ENCODE measurements at regions of chr19 and their contacts with region 1.

Region 1: DNA sequence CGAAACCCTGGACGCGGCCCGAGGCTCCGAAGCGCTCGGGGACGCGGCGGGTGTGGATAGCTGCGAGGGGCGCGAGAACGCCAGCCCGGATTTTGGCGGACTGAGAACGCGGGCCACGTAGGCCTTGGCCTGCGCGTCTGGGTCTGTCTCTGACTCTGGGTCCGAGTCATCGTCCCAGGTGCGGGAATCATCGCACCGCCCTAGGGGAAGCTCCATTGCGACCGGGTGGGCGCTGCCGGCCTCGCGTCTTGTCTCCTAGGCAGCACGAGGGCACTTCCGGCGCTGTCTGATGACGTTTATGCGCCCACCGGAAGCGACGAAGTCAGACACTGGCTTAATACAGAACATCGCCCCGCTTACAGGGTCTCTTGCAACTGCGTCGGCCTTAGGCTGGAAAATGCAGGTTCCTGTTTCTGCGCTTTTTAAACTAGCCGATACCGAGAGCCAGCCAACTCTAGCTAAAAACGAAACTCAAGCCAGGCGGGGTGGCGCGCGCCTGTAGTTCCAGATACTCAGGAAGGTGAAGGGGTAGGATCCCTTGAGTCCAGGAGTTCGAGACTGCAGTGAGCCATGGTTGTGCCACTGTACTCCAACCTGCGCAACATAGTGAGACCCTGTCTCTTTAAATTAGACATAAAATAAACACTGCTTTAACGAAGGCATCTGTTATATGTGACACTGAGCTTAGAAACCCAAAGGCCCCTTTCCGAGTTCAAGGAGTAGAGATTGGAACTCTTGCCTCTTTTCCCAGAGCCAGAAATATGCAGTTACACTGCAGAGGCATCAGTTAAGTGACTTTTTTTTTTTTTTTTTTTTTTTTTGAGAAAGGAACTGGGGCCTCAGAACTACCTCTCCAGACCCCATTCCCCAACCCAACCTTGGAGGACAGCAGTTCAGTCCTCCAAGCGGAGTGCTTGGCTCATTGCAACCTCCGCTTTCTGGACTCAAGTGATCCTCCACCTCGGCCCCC is at the start of gene FBXW9:
- DNase-seq: peak; percentile 99
- ATAC-seq: peak; percentile 92
- H3K4me3 Mint-ChIP-seq: peak within 1 kb of the TSS; percentile 79
- H3K27ac Mint-ChIP-seq: peak within 1 kb of the TSS; percentile 96
- H3K4me1 Mint-ChIP-seq: peaks cover 13% of the 10 kb centered on the region
- H3K27me3 Mint-ChIP-seq: no peaks in the 10 kb centered on the region
- CTCF ChIP-seq: no peak
- total RNA-seq, gene FBXW9: 9.9 to 10.8 TPM

Region 2: DNA sequence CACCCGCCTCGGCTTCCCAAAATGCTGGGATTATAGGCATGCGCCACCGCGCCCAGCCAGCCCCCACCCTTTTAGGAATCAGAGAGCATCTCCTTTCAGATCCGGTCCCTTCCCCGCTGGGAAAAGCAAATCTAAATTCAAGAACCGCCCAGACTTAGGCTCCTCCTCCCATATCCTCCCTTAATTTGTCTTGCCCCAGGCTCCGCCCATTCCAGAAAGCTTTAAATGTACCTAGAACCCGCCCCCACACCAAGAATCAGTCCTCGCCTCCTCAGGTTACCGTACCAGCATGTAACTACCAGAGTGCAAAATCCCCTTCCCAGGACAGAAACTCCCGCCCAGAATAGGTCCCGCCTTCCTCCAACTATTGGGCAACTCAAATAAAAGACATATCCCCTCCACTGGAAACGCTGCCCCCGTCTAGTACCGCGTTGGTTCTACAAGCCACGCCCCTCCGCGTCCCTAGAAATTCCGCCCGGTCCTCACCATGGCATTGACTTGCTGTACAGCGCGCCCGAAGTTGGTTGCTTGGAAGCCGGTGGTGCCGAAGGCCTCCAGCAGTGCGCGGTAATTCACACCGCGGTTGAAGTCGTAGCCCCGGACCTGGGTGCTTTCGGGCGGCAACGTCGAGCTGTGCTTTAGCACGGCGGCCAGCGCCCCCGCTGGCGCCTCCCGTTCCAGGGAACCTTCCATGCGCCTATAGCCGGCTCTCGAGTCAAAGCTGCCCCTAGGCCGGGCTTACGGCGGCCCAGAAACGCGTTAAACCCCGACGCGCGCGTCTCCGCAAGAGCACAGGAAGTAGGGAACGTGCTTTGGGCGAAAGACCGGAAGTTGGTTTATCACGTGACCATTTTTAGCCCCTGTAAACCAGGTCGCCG is 15.3 kb before region 1 on chr19 and contains the start of gene DHPS:
- CTCF ChIA-PET with region 1: interaction called, 5 read pairs
- POLR2A ChIA-PET with region 1: interaction called, 38 read pairs
- intact Hi-C with region 1: no loop called
- DNase-seq: peak; percentile 97
- ATAC-seq: peak; percentile 89
- H3K4me3 Mint-ChIP-seq: peak within 1 kb of the TSS; percentile 93
- H3K27ac Mint-ChIP-seq: peak within 1 kb of the TSS; percentile 94
- H3K4me1 Mint-ChIP-seq: peaks cover 25% of the 10 kb centered on the region
- H3K27me3 Mint-ChIP-seq: no peaks in the 10 kb centered on the region
- CTCF ChIP-seq: no peak
- total RNA-seq, gene DHPS: 113 TPM

Region 3: DNA sequence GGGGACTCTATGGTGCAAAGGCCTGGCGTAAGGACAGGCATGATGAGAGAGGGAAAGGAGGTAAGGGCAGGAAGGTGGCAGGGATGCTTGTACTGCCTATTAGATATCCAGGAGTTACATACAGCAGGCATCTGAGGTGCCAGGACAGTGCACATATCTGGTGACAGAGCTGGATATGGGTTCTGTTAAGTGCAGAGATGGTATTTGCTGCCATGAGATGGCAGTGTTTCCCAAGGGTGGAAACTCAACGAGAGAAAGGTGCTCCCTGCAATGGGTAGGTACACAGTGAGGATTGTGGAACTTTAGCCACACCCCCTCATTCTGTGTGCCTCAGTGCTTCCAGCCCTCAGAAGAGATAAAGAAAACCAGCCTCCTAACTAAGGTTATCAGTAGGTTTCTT is 20.2 kb after region 1 on chr19:
- CTCF ChIA-PET with region 1: interaction called, 4 read pairs
- POLR2A ChIA-PET with region 1: interaction called, 18 read pairs
- intact Hi-C with region 1: no loop called
- DNase-seq: peak; percentile 49
- ATAC-seq: peak; percentile 67
- H3K4me3 Mint-ChIP-seq: no peak overlapping the region
- H3K27ac Mint-ChIP-seq: peak overlapping the region; percentile 20
- H3K4me1 Mint-ChIP-seq: peaks cover 23% of the 10 kb centered on the region
- H3K27me3 Mint-ChIP-seq: no peaks in the 10 kb centered on the region
- CTCF ChIP-seq: peak; percentile 28

Region 4: GRCh38 chr19:12774584-12775555 is 78.2 kb after region 1 on chr19 and contains the start of gene HOOK2:
- CTCF ChIA-PET with region 1: no interaction called
- POLR2A ChIA-PET with region 1: no interaction called
- intact Hi-C with region 1: no loop called
- DNase-seq: no peak
- ATAC-seq: no peak
- H3K4me3 Mint-ChIP-seq: peak within 1 kb of the TSS; percentile 71
- H3K27ac Mint-ChIP-seq: peak within 1 kb of the TSS; percentile 71
- H3K4me1 Mint-ChIP-seq: peaks cover 34% of the 10 kb centered on the region
- H3K27me3 Mint-ChIP-seq: no peaks in the 10 kb centered on the region
- CTCF ChIP-seq: no peak
- total RNA-seq, gene HOOK2: 17.3 to 18.4 TPM